Activated CD4-positive, alpha-beta memory T cell treated with anti-CD3 and anti-CD28 coated beads for 36 hours (primary cell): ENCODE measurements at regions of chr1 and their contacts with region 1.

Region 1: DNA sequence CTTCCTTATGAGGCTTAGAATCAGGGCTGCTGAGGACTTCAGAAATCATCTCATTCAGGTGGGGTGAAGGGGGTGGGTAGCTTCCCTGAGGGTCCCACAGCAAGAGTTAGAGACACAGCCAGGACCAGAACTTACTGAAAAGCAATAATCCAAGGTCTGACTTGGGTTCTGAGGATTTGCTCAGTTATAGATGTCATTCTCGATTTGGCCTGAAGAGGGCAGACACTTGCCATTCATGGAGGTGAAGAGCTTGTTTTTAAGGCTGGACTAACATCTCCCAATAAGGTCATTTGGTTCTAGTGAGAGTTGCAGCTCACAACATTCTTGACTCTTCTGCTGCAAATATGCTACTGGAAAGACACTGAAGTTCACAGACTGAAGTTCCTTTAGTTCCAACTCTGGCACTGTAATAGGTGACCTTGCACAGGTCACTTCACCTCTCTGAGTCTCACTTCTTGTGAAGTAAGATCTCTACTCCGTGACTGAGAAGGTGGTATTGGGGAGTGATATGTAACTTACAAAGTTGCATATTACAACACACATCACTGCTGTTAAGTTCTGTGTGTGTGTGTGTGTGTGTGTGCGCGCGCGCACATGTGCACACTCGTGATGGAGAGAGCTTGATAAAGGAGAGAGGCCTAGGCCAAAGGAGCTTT is 69.8 kb upstream of the DIRAS3 start:
- DNase-seq: peak; percentile 22
- H3K4me3 Mint-ChIP-seq: no peak overlapping the region
- H3K27ac Mint-ChIP-seq: no peak overlapping the region
- H3K4me1 Mint-ChIP-seq: peaks cover 6% of the 10 kb centered on the region
- H3K27me3 Mint-ChIP-seq: peaks cover 1% of the 10 kb centered on the region

Region 2: DNA sequence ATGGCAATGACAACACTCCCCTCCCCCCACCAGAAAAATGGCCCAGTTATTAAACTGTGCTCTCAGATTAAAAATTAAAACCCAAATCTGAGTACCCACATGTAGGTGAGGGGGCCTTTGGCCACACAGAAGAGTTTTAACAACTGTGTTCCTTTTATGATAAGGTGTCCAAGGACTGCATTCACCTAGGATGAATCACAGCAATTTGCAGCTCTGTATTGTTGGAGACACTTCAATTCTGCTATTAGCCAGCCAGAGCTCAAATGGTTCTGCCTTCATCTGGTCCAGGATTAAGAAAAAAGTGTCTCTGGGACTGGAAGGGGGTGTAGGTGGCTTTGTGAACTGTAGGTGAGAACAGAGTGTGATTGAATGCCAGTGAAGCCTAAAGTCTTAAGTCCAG is 26.5 kb before region 1 on chr1:
- CTCF ChIA-PET with region 1: interaction called, 11 read pairs
- POLR2A ChIA-PET with region 1: no interaction called
- intact Hi-C with region 1: no loop called
- DNase-seq: no peak
- H3K4me3 Mint-ChIP-seq: no peak overlapping the region
- H3K27ac Mint-ChIP-seq: no peak overlapping the region
- H3K4me1 Mint-ChIP-seq: no peaks in the 10 kb centered on the region
- H3K27me3 Mint-ChIP-seq: peaks cover 2% of the 10 kb centered on the region

Region 3: DNA sequence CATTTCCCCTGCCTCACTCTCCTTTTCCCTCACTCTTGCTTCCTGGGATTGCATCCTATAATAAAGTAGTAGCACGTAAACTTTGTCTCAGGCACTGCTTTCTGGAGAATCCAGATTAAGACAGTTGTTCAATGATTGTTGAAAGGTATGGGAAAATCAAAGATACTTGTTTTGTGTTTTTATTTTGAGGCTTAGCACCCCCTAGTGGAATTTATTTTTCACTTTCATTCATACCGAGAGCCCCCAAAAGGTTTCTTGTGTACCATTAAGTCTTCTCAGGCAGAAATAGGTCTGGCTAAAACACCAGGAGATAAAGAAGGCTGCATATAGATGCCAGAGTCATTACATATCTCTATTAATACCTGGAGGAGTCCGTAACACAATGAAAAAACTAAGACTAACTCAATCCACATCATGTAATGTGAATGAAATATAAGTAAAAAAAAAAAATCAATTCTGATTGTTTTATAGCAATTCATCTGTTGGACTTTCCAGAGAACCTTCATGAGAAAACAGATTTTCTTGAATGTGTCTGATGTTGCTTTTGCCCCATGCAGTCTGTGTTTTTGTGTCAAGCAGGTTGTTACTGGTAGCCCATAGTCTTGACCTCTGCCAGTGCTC is 226.0 kb after region 1 on chr1:
- CTCF ChIA-PET with region 1: interaction called, 12 read pairs
- POLR2A ChIA-PET with region 1: no interaction called
- intact Hi-C with region 1: loop called (anchors 1 kb)
- DNase-seq: no peak
- H3K4me3 Mint-ChIP-seq: no peak overlapping the region
- H3K27ac Mint-ChIP-seq: no peak overlapping the region
- H3K4me1 Mint-ChIP-seq: no peaks in the 10 kb centered on the region
- H3K27me3 Mint-ChIP-seq: peaks cover 3% of the 10 kb centered on the region

Region 4: GRCh38 chr1:68442822-68443556 is 322.7 kb after region 1 on chr1:
- CTCF ChIA-PET with region 1: interaction called, 13 read pairs
- POLR2A ChIA-PET with region 1: no interaction called
- intact Hi-C with region 1: loop called (anchors 2 kb)
- DNase-seq: peak; percentile 9
- H3K4me3 Mint-ChIP-seq: no peak overlapping the region
- H3K27ac Mint-ChIP-seq: no peak overlapping the region
- H3K4me1 Mint-ChIP-seq: no peaks in the 10 kb centered on the region
- H3K27me3 Mint-ChIP-seq: peaks cover 1% of the 10 kb centered on the region